Psoas muscle (tissue), 8 donors: ENCODE measurements at regions of chrX and their contacts with region 1.

Region 1: GRCh38 chrX:40877887-40878286 is 142.5 kb upstream of the MED14 start:
- DNase-seq: no peak
- ATAC-seq: peak in 1 of 4 donors; percentile 70
- H3K4me3 ChIP-seq: peak overlapping the region; percentile 20
- H3K27ac ChIP-seq: no peak overlapping the region
- H3K4me1 ChIP-seq: no peaks in the 10 kb centered on the region
- H3K27me3 ChIP-seq: peaks cover 0 to 6% (median 0%) of the 10 kb centered on the region in 3 donors
- CTCF ChIP-seq: peak; percentile 45

Region 2: GRCh38 chrX:40971736-40972135 is 93.8 kb after region 1 on chrX:
- intact Hi-C with region 1: no loop called
- DNase-seq: no peak
- ATAC-seq: no peak
- H3K4me3 ChIP-seq: no peak overlapping the region
- H3K27ac ChIP-seq: no peak overlapping the region
- H3K4me1 ChIP-seq: no peaks in the 10 kb centered on the region
- H3K27me3 ChIP-seq: peaks cover 0 to 17% (median 0%) of the 10 kb centered on the region in 3 donors
- CTCF ChIP-seq: no peak

Region 3: GRCh38 chrX:41116948-41117347 is 239.1 kb after region 1 on chrX:
- intact Hi-C with region 1: loop called (anchors 5 to 10 kb)
- DNase-seq: no peak
- ATAC-seq: peak in 1 of 4 donors; percentile 18
- H3K4me3 ChIP-seq: no peak overlapping the region
- H3K27ac ChIP-seq: no peak overlapping the region
- H3K4me1 ChIP-seq: peaks cover 33% of the 10 kb centered on the region
- H3K27me3 ChIP-seq: no peaks in the 10 kb centered on the region
- CTCF ChIP-seq: no peak